ENCODE measurements at regions of chr6 and their contacts with region 1.

Region 1: GRCh38 chr6:132259070-132259469 is 142.2 kb downstream of the MOXD1 start:
- DNase-seq: no peak
- H3K4me3 ChIP-seq: no peak overlapping the region
- CTCF ChIP-seq: peak; percentile 19

Region 2: GRCh38 chr6:132247381-132248159 is 11.5 kb before region 1 on chr6:
- CTCF ChIA-PET with region 1: interaction called, 38 read pairs
- POLR2A ChIA-PET with region 1: no interaction called
- DNase-seq: no peak
- H3K4me3 ChIP-seq: no peak overlapping the region
- CTCF ChIP-seq: no peak

Region 3: DNA sequence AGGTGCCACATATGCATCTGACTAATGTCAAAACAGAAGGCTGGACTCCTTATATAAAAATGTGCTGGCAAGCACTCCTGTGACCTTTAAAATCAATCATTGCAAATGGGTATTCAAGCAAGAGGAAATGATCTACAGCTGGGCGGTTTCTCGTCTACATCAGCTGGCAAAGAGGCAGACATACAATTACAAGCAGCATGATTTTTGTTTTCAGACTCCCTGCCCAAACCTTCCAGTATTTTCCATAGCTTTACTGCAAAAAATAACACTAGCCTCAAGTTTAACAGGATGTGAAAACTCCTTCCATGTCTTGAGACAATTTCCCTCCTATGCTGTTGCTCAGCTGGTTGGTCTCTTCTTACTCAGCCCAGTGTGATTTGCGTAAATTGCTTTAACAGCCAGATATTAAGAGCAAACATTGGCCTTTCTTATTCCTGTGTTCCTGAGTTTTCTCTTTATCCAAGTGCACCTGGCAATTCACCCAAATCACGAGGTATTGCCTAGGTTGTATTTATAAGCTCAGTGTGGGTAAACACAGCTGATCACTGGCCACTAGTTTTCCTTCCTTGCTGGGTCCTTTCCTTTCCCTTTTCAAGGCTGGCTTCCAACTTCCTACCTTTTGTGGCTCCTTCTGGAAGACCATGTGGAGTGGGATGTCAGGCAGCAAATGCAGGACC is 11.8 kb after region 1 on chr6:
- CTCF ChIA-PET with region 1: interaction called, 29 read pairs
- POLR2A ChIA-PET with region 1: no interaction called
- DNase-seq: no peak
- H3K4me3 ChIP-seq: no peak overlapping the region
- CTCF ChIP-seq: no peak

Region 4: DNA sequence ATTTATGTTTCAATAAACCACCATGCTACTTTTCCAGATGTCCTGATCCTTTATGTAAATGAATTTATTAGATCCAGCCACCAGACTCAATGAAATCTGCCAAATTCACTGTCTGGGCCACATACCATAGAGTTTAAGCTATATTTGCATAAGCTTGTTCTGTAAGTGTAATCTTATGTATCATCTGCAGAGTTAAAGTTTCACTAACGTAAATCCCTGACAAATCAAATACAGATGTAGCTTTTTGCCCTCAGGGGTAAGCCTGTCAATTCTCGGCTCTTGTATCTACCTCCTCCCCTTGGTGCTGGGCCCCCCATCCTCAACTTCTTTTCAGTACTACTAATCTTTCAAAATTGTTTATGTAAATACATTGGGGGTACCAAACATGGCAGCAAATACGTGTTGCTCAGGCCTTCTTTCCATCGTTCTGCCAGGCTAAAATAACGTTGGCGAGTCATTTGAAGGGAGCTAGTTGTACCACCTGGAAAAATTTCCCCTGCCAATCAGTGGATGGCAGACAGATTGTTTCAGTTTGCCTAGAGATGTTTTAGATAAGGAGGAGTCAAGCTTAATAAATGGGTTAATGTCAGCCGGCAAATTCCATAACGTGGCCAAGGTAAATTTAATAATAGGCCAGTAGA is 634.8 kb after region 1 on chr6:
- CTCF ChIA-PET with region 1: no interaction called
- POLR2A ChIA-PET with region 1: no interaction called
- DNase-seq: no peak
- H3K4me3 ChIP-seq: no peak overlapping the region
- CTCF ChIP-seq: no peak

Measured in AG04449 (cell line).